Psoas muscle (tissue), 8 donors: ENCODE measurements at regions of chr7 and their contacts with region 1.

Region 1: DNA sequence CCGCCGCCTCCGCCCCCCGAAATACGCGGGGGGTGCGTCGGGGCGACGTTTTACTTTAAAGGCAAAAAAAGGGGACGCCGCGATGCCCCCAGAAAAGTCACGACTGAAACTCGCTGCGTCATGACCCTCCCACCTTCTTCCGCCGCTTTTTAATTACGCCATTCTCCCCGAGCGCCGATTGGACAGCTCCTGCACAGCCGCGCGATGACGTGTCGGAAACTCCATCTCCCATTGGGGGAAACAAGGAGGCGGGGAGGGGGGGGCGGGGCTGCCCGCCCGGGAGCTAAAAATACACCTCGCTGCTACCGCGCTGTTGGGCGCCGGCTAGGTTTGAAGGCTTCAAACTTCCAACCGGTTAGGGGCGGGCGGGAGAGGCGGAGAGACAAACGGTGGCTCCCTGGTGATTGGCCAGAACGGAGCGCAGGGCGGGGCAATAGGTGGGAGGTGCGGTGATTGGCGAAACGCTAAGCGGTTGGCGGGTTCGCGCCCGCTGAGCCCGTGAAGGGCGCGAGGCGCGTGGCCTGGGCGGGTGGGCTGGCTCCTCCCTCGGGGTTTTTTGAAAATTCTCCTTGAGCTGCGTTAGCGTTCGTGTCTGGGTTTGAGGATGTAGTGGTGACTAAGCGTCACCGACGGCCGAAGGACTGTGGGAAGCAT is at the start of gene RHEB:
- DNase-seq: peak; percentile 99
- ATAC-seq: peak; percentile 90 to 93 (median 91)
- H3K4me3 ChIP-seq: peak within 1 kb of the TSS; percentile 85
- H3K27ac ChIP-seq: peak within 1 kb of the TSS; percentile 99
- H3K4me1 ChIP-seq: peaks cover 20% of the 10 kb centered on the region
- H3K27me3 ChIP-seq: no peaks in the 10 kb centered on the region
- CTCF ChIP-seq: no peak
- total RNA-seq, gene RHEB: 98.0 to 191 (median 142) TPM

Region 2: GRCh38 chr7:151181011-151181431 is 338.9 kb before region 1 on chr7:
- intact Hi-C with region 1: no loop called
- DNase-seq: peak in 1 of 2 donors; percentile 50
- ATAC-seq: peak in 1 of 4 donors; percentile 18
- H3K4me3 ChIP-seq: no peak overlapping the region
- H3K27ac ChIP-seq: no peak overlapping the region
- H3K4me1 ChIP-seq: peaks cover 32% of the 10 kb centered on the region
- H3K27me3 ChIP-seq: no peaks in the 10 kb centered on the region
- CTCF ChIP-seq: no peak

Region 3: DNA sequence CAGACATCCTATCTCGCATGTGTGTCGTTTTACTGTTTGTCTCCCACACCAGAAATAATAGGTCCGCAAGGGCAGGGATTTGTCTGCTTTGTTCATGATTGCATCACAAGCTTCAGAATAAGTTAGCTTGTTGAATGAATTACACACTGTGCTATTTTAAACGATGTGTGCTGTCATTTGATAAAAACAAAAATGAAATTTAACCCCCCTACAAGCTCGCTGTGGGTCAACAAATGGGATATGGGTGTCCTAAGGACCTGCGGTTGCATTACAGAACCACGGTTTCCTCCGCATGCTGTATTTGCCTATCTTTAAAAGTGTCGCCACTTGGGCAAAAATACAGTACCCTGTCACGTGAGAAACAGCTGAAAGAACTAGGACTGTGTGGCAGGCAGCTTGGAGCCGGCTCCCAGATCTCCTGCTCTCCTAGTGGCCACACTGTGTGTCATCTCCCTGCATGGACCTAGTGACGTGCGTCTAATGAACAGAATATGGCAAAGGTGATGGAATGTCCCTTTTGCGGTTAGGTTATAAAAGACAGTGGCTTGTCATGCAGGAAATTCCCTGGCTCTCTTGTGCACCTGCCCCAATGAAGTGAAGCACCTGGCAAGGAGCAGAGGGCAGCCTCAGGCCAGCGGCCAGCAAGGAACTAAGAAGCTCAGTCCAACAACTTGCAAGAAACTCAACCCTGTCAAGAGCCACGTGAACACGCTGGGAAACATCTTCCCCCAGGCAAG is 47.1 kb before region 1 on chr7:
- intact Hi-C with region 1: no loop called
- DNase-seq: peak; percentile 60 to 80
- ATAC-seq: peak; percentile 88 to 93 (median 91)
- H3K4me3 ChIP-seq: no peak overlapping the region
- H3K27ac ChIP-seq: peak overlapping the region; percentile 90
- H3K4me1 ChIP-seq: peaks cover 27% of the 10 kb centered on the region
- H3K27me3 ChIP-seq: no peaks in the 10 kb centered on the region
- CTCF ChIP-seq: peak; percentile 35

Region 4: GRCh38 chr7:151494301-151495284 is 25.3 kb before region 1 on chr7:
- intact Hi-C with region 1: no loop called
- DNase-seq: no peak
- ATAC-seq: no peak
- H3K4me3 ChIP-seq: no peak overlapping the region
- H3K27ac ChIP-seq: no peak overlapping the region
- H3K4me1 ChIP-seq: peaks cover 73% of the 10 kb centered on the region
- H3K27me3 ChIP-seq: no peaks in the 10 kb centered on the region
- CTCF ChIP-seq: no peak

Region 5: GRCh38 chr7:151599401-151600227 is 79.7 kb after region 1 on chr7:
- intact Hi-C with region 1: loop called in 1 of 2 experiments (anchors 5 kb)
- DNase-seq: peak in 1 of 2 donors; percentile 49
- ATAC-seq: peak; percentile 86 to 94 (median 92)
- H3K4me3 ChIP-seq: no peak overlapping the region
- H3K27ac ChIP-seq: peak overlapping the region; percentile 46
- H3K4me1 ChIP-seq: peaks cover 12% of the 10 kb centered on the region
- H3K27me3 ChIP-seq: no peaks in the 10 kb centered on the region
- CTCF ChIP-seq: no peak